Activated CD8-positive, alpha-beta memory T cell treated with anti-CD3 and anti-CD28 coated beads, Interleukin-2, amount 10 ng/mL, durations not matched to agents 7 days and 5 days (primary cell): ENCODE measurements at regions of chr20 and their contacts with region 1.

Region 1: DNA sequence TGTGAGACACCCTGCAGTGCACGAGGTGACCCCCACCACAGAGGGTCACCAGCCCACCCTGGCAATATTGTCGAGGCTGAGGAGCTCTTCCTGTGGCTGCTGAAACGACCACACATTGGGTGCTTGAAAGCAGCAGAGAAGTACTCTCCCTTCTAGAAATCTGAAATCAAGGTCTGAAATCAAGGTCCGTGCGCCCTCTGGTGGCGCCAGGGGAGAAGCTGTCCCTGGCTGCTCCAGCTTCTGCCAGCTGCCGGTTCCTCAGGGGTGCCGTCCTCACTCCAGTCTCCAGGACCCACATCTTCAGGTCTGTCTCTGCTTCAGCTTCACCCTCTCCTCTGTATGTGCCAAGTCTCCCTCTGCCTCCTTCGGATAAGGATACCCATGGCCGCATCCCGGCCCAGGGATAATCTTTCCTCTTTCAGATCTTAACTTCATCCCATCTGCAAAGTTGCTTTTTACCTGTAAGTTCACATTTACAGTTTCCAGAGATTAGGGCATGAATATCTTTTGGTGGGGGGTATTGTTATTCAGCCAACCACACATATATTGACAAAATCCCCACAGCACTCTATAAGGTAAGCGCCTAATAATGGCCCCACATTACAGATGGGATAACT is 108.3 kb upstream of the PHACTR3 start:
- DNase-seq: peak; percentile 71
- ATAC-seq: peak; percentile 66
- H3K4me3 Mint-ChIP-seq: no peak overlapping the region
- H3K27ac Mint-ChIP-seq: no peak overlapping the region
- H3K4me1 Mint-ChIP-seq: no peaks in the 10 kb centered on the region
- H3K27me3 Mint-ChIP-seq: peaks cover 23% of the 10 kb centered on the region

Region 2: GRCh38 chr20:59485576-59486454 is 10.2 kb before region 1 on chr20:
- CTCF ChIA-PET with region 1: interaction called, 11 read pairs
- DNase-seq: no peak
- ATAC-seq: no peak
- H3K4me3 Mint-ChIP-seq: no peak overlapping the region
- H3K27ac Mint-ChIP-seq: no peak overlapping the region
- H3K4me1 Mint-ChIP-seq: no peaks in the 10 kb centered on the region
- H3K27me3 Mint-ChIP-seq: peaks cover 10% of the 10 kb centered on the region

Region 3: DNA sequence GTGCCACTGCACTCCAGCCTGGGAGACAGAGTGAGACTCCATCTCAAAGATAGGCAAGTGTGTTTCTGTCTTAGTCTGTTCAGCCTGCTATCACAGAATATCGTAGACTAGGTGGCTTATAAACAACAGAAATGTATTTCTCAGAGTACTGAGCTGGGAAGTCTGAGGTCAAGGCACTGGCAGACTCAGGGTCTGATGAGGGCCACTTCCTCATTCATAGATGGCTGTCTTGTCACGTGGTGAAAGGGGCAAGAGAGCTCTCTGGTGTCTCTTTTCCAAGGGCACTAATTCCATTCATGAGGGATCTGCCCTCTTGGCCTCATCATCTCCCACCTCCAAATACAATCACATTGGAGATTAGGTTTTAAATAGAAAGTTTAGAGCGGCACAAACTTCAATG is 12.7 kb after region 1 on chr20:
- CTCF ChIA-PET with region 1: interaction called, 12 read pairs
- DNase-seq: no peak
- ATAC-seq: no peak
- H3K4me3 Mint-ChIP-seq: no peak overlapping the region
- H3K27ac Mint-ChIP-seq: no peak overlapping the region
- H3K4me1 Mint-ChIP-seq: no peaks in the 10 kb centered on the region
- H3K27me3 Mint-ChIP-seq: peaks cover 11% of the 10 kb centered on the region

Region 4: GRCh38 chr20:59598625-59599310 is 102.8 kb after region 1 on chr20:
- CTCF ChIA-PET with region 1: no interaction called
- DNase-seq: peak; percentile 56
- ATAC-seq: peak; percentile 47
- H3K4me3 Mint-ChIP-seq: no peak overlapping the region
- H3K27ac Mint-ChIP-seq: no peak overlapping the region
- H3K4me1 Mint-ChIP-seq: no peaks in the 10 kb centered on the region
- H3K27me3 Mint-ChIP-seq: peaks cover 47% of the 10 kb centered on the region